HEK293T (cell line): ENCODE measurements at regions of chr19 and their contacts with region 1.

Region 1: DNA sequence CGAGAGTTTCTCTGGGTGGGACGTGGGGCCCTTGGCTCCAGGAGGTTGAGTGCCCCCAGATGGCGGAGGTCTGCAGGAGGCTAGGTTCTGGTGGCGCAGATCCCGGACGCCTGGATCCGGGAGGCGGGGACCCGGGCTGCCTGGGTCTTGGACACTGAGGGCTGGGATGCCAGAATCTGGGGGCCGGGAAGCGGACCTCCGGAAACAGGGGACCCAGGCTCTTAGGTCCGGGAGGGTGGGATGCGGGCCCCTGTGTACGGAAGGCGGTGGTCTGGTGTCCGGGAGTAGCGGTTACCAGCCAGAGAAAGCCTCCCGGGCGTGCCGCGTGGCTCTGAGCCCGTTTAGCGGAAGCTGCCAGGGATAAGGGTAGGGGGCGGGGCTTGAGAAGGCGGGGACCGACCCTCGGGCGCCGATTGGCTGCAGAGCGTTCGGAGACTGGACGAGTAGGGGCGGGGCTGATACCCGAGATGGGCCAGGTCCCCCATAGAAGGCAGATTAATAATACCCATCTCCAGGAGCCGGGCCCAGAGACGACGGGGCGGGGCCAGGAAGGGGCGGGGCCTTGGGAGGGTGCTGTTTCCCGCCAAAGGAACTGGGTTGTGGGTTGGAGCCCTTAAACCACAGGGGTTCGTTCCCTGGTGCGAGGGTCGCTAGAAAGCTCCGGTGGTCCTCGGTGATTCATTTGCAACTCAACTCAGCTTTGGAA is at the start of gene SLC1A5:
- DNase-seq: peak; percentile 99

Region 2: GRCh38 chr19:46551164-46551563 is 237.3 kb before region 1 on chr19:
- CTCF ChIA-PET with region 1: no interaction called
- POLR2A ChIA-PET with region 1: no interaction called
- DNase-seq: no peak

Region 3: GRCh38 chr19:46766569-46767317 is 21.7 kb before region 1 on chr19:
- CTCF ChIA-PET with region 1: interaction called, 5 read pairs
- POLR2A ChIA-PET with region 1: interaction called, 16 read pairs
- DNase-seq: peak; percentile 74

Region 4: GRCh38 chr19:46821498-46822409 is 33.3 kb after region 1 on chr19:
- CTCF ChIA-PET with region 1: no interaction called
- POLR2A ChIA-PET with region 1: interaction called, 35 read pairs
- DNase-seq: no peak

Region 5: DNA sequence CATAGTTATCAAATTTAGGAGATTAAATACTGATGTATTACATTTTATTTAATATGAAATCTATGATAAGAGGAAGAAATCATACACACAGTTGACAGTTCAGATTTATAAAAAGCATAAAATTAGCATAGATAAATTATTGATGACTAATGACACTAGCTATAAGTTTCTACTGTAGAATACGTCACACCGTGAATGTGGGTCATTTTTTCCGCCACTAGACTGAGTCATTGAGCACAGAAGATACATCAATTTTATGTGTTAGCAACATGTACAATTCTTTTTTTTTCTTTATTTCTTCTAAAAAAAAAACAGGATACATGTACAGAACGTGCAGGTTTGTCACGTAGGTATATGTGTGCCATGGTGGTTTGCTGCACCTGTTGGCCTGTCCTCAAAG is 40.1 kb after region 1 on chr19:
- CTCF ChIA-PET with region 1: no interaction called
- POLR2A ChIA-PET with region 1: interaction called, 17 read pairs
- DNase-seq: no peak

Region 6: DNA sequence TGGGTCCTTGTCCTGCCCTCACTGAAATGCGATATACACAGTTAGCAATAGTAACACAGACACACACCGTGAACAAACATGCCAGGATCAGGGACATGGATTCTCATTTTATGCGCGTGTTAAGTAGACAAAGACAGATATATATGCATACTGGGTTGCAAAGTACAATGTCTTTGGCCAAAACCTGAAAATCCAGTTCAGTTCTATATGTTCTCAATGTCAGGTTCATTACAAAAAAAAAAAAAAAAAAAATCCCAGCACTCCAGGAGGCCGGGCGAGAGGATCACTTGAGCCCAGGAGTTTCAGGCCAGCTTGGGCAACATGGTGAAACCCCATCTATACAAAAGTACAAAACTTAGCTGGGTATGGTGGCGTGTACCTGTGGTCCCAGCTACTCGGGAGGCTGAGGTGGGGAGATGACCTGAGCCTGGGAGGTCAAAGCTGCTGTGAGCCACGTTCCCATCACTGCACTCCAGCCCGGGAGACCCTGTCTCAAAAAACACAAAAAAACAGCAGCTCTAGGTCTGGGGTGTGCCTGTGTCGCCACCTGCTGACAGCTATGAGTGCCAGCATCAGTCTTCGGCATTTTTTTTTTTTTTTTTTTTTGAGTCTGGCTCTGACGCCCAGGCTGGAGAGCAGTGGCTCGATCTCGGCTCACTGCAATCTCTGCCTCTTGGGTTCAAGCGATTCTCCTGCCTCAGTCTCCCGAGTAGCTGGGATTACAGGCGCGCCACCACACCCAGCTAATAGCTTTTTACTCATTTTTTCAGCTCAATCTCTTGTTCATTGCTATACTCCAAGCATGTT is 51.9 kb after region 1 on chr19:
- CTCF ChIA-PET with region 1: no interaction called
- POLR2A ChIA-PET with region 1: interaction called, 20 read pairs
- DNase-seq: peak; percentile 69